ENCODE measurements at regions of chr2 and their contacts with region 1.

Region 1: DNA sequence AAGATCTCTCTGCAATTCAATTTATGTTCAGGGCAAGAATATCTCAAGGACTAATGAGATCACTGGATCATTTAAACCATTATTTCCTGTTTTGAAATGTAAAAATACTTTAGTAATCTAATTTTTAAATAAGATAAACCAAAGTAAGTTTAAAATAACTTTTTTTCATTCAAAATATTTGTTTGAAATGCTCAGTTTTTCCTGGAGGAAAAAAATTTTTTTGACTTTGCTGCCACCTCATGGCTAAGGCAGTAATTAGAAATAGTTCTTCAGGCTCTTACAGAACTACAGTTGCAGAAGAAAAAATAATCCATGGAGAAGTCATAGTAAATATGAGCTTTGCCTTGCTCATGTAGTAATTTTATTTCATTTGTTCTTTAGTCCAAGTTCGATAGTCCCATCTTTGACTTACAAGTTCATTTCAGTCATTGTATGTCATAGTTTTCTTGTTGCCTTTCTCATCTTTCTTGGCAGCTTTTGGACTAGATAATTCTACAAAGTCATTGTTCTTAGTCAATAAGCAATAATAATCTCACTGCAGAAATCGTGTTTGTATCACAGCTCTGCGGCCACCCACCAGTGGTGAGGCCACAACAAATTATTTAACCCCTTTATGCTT is 127.4 kb downstream of the DPP4 start:
- DNase-seq: no peak
- H3K4me3 ChIP-seq: no peak overlapping the region
- H3K27ac ChIP-seq: no peak overlapping the region
- H3K4me1 ChIP-seq: peaks cover 0 to 10% (median 2%) of the 10 kb centered on the region in 6 donors
- H3K27me3 ChIP-seq: no peaks in the 10 kb centered on the region
- CTCF ChIP-seq: peak in 7 of 11 experiments; percentile 39 to 60 (median 55)
- POLR2A ChIP-seq: no peak

Region 2: DNA sequence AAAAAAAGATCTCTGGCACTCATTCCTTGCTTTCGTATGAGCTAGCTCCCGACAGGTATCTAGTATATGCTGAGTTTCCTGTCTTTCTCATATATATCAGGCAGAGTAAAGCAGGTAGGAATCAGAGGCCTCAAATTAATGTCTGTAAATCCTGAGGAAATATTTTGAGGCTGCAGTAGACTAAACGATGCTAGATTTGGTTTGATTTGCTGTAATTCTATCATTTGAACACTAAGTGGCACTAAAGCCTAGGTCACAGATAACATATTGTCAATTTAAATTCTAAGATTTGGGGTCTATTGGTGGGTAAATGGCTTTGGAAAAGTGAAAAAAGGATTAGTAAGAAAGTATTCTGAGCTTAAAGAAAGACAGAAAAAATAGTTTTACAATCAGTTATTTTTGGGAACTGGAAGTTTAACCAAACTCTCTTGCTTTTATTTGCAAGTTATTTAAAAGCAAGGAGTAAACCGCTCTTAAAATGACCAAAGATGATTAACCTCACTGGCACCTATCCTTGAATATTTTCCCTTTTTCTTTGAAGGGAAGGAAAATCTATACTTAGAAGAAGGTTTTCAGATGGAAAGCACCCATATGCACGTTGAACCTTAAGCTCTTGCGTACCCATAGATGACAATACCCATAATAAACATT is 360.0 kb before region 1 on chr2:
- intact Hi-C with region 1: loop called (anchors 5 kb)
- DNase-seq: no peak
- H3K4me3 ChIP-seq: no peak overlapping the region
- H3K27ac ChIP-seq: no peak overlapping the region
- H3K4me1 ChIP-seq: no peaks in the 10 kb centered on the region
- H3K27me3 ChIP-seq: no peaks in the 10 kb centered on the region
- CTCF ChIP-seq: peak; percentile 23 to 70 (median 51)
- POLR2A ChIP-seq: no peak

Measured in spleen (tissue), 13 donors.